ENCODE measurements at regions of chr2 and their contacts with region 1.

Region 1: GRCh38 chr2:225889446-225889850 is 489.9 kb downstream of the NYAP2 start:
- DNase-seq: no peak
- ATAC-seq: peak in 1 of 2 donors; percentile 59
- H3K4me3 ChIP-seq: no peak overlapping the region
- H3K27ac ChIP-seq: no peak overlapping the region
- H3K4me1 ChIP-seq: no peaks in the 10 kb centered on the region
- H3K27me3 ChIP-seq: no peaks in the 10 kb centered on the region

Region 2: DNA sequence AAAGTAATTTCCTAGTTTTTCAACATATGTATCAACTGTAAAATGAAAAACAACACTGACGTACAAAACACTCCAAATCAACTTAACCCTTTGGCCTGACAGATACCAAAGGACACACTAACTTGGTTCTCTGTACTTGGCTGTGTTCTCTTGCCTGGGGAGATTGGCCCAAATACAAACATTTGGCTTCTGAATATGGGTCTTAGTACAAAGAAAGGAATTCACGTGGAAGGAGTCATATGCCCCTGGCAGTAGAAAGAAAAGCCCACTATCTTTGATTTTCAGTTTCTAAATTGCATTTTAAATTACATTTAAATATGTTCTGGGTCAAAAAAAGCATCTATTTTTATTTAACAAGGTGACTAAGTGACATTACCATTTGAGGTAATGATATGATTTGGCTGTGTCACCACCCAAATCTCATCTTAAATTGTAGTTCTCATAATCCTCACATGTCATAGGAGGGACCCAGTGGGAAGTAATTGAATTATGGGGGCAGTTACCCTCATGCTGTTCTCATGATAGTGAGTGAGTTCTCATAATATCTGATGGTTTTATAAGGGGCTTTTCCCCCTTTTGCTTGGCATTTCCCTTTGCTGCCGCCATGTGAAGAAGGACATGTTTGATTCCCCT is 1019.7 kb before region 1 on chr2:
- intact Hi-C with region 1: no loop called
- DNase-seq: no peak
- ATAC-seq: peak in 1 of 2 donors; percentile 59
- H3K4me3 ChIP-seq: no peak overlapping the region
- H3K27ac ChIP-seq: no peak overlapping the region
- H3K4me1 ChIP-seq: no peaks in the 10 kb centered on the region
- H3K27me3 ChIP-seq: no peaks in the 10 kb centered on the region

Region 3: DNA sequence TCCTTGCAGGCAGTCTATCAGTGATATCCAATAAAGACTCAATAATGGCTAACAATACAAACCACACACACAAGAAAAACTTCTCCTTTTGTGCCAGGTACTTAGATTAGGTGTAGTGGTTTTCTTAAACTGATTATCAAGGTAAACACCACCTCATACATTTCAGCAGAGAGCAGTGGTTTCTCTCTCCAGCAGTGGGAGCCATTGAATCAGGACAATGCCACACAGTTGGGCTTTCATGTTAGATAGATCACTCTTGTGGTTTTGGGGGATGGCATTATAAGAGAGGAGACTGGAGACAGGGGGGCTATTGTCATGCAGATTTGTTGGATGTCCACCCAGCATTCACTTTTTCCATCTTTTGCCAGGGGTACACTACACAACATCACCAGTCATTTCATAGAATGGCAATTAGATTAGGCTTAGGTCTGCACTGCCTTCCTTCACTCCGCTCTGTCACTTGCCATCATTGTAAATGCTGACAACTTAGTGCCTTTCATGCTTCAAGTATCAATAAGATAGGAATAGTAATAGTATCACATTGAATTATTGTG is 923.8 kb after region 1 on chr2:
- intact Hi-C with region 1: loop called in 1 of 4 experiments (anchors 10 kb)
- DNase-seq: no peak
- ATAC-seq: no peak
- H3K4me3 ChIP-seq: no peak overlapping the region
- H3K27ac ChIP-seq: no peak overlapping the region
- H3K4me1 ChIP-seq: no peaks in the 10 kb centered on the region
- H3K27me3 ChIP-seq: no peaks in the 10 kb centered on the region